WTC11 (cell line): ENCODE measurements at regions of chr5 and their contacts with region 1.

Region 1: DNA sequence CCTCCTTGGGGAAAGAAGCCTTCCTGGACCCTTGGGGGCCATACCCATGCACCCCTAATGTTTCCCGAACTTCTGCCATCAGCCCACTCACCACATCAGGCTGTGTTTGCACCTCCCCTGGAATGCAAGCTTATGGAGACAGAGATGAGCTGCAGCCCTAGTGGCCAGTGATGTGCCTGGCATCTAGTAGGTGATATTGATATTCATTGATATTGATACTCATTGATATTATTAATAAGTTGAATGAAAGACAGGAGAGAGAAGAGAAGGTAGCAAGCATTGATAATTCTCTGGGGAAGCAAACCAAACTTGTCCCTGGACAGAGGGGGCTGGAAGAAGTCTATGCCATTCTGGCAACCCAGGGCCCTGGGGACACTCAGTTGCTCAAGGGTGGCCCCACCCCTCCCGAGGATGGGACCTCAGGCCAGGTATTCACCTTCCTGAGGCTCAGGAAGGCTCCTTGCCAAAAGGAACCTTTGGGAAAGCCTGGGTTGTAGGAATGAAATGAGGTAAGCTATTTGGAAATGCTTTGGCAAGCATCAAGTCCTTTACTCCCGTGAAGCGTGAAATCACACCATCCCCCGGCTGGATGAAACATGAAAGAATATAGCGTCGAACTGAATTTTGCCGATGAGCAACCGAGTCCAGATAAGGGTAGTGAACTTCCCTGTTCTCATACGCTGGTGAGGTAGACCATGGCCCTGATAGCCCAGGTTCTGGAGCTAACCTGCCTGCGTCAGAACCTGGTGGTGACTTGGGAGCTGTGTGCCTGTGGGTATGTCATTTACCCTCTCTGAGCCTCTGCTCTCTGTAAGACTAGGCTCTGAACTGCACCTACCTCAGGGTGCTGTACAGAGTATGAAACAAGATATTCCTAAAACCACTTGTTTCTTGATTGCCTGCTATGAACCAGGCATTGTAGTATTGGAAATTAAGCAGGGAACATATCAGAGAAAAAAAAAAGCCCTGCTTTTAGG is 105.1 kb upstream of the BOD1 start:
- DNase-seq: no peak
- ATAC-seq: peak; percentile 48
- H3K4me3 Mint-ChIP-seq: no peak overlapping the region
- H3K27ac Mint-ChIP-seq: no peak overlapping the region
- H3K4me1 Mint-ChIP-seq: peaks cover 37% of the 10 kb centered on the region
- H3K27me3 Mint-ChIP-seq: no peaks in the 10 kb centered on the region
- CTCF ChIP-seq: no peak

Region 2: GRCh38 chr5:173689737-173690360 is 31.7 kb before region 1 on chr5:
- CTCF ChIA-PET with region 1: no interaction called
- POLR2A ChIA-PET with region 1: no interaction called
- DNase-seq: no peak
- ATAC-seq: peak; percentile 61
- H3K4me3 Mint-ChIP-seq: no peak overlapping the region
- H3K27ac Mint-ChIP-seq: no peak overlapping the region; the same call in 1 of the 2 replicates
- H3K4me1 Mint-ChIP-seq: peaks cover 18% of the 10 kb centered on the region
- H3K27me3 Mint-ChIP-seq: peaks cover 3% of the 10 kb centered on the region; the same call in 1 of the 2 replicates
- CTCF ChIP-seq: no peak

Region 3: GRCh38 chr5:173786266-173787187 is 65.0 kb after region 1 on chr5:
- CTCF ChIA-PET with region 1: interaction called, 12 read pairs
- POLR2A ChIA-PET with region 1: no interaction called
- DNase-seq: no peak
- ATAC-seq: peak; percentile 74
- H3K4me3 Mint-ChIP-seq: no peak overlapping the region
- H3K27ac Mint-ChIP-seq: peak overlapping the region; percentile 8; the same call in 1 of the 2 replicates
- H3K4me1 Mint-ChIP-seq: peaks cover 17% of the 10 kb centered on the region
- H3K27me3 Mint-ChIP-seq: peaks cover 5% of the 10 kb centered on the region
- CTCF ChIP-seq: no peak